Activated CD4-positive, alpha-beta T cell treated with anti-CD3 and anti-CD28 coated beads for 36 hours (primary cell): ENCODE measurements at regions of chr2 and their contacts with region 1.

Region 1: DNA sequence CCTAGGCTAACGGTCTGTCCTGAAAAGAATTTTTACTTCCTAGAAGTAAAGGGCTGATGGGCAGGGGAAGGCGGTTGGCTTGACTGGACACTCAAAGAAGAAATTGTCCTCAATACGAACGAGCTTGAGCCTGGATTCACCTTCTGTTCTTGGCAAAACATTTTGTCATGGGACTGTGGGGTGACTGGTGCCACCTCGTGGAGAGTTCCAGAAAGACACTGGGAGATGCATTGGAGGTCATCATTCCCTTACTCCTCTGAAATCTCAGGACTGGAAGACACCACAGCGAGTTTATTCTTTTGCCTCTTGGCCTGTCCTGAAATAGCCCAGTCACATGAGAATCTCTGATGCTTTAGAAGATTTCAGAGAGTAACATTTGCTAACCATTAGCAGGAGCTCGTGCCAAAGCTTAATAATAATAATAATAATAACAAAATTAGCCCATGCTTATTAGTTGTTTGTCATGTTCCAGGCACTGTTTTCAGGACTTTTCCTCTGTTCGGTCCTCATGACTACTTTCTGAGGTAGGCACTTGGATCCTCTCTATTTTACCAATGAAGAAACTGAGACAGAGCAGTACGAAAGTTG is 44.5 kb downstream of the TMEM182 start:
- DNase-seq: peak; percentile 64
- ATAC-seq: no peak
- H3K4me3 Mint-ChIP-seq: no peak overlapping the region
- H3K27ac Mint-ChIP-seq: no peak overlapping the region
- H3K4me1 Mint-ChIP-seq: peaks cover 22% of the 10 kb centered on the region
- H3K27me3 Mint-ChIP-seq: no peaks in the 10 kb centered on the region

Region 2: GRCh38 chr2:102520028-102520427 is 286.3 kb before region 1 on chr2:
- CTCF ChIA-PET with region 1: no interaction called
- POLR2A ChIA-PET with region 1: no interaction called
- intact Hi-C with region 1: loop called in 1 of 2 experiments (anchors 5 kb)
- DNase-seq: peak; percentile 52
- ATAC-seq: peak; percentile 80
- H3K4me3 Mint-ChIP-seq: no peak overlapping the region
- H3K27ac Mint-ChIP-seq: no peak overlapping the region
- H3K4me1 Mint-ChIP-seq: no peaks in the 10 kb centered on the region
- H3K27me3 Mint-ChIP-seq: peaks cover 2% of the 10 kb centered on the region

Region 3: DNA sequence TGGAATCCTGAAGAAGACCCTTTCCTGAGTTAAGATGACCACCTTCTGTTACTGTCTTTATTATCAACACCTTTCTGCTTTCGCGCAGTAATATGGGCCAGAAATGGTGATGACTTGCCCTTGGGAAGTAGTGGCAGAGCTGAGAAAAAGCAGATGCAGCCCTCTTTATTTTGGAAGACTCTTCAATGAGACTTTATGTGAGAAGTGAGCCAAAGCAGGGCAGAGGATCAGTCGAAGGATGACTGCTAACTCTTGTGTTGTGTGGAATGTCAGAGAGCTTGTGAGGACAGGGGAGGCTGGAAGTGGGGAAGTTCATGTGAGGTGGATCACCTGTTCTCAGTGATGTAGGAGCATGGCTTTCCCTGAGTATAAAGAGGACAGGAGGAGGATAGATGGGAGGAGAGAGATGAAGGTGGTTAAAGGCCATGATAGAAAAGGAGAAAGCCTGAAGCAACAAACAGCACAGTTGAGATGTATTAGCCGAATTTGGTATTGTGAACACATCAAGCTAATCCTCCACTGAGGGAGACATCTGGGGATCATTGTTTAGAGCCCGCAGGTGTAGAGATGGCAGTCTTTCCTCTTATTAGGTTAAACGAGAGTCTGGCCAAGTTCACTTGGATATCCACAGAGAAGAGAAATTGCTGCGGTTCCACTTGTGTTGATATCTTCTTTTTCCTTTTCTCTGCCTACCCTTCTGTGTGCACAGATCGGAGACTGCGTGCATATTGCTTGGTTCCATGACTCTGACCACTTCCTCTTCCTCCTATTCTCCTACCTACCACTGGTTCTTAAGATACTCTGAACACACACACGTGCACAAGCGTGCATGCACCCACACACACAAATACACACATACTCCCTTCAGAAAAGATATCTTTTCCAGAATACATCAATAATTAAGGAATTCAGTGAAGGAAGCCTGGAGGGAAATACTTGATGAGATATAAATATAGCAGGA is 119.6 kb before region 1 on chr2:
- CTCF ChIA-PET with region 1: no interaction called
- POLR2A ChIA-PET with region 1: no interaction called
- intact Hi-C with region 1: no loop called
- DNase-seq: peak; percentile 18
- ATAC-seq: peak; percentile 88
- H3K4me3 Mint-ChIP-seq: no peak overlapping the region
- H3K27ac Mint-ChIP-seq: no peak overlapping the region
- H3K4me1 Mint-ChIP-seq: peaks cover 8% of the 10 kb centered on the region
- H3K27me3 Mint-ChIP-seq: no peaks in the 10 kb centered on the region

Region 4: GRCh38 chr2:102736410-102737409 is 69.6 kb before region 1 on chr2:
- CTCF ChIA-PET with region 1: interaction called, 4 read pairs
- POLR2A ChIA-PET with region 1: no interaction called
- intact Hi-C with region 1: loop called in 1 of 2 experiments (anchors 5 kb)
- DNase-seq: peak; percentile 91
- ATAC-seq: peak; percentile 94
- H3K4me3 Mint-ChIP-seq: peak overlapping the region; percentile 96
- H3K27ac Mint-ChIP-seq: peak overlapping the region; percentile 91
- H3K4me1 Mint-ChIP-seq: peaks cover 31% of the 10 kb centered on the region
- H3K27me3 Mint-ChIP-seq: no peaks in the 10 kb centered on the region

Region 5: GRCh38 chr2:102771114-102771513 is 35.2 kb before region 1 on chr2:
- CTCF ChIA-PET with region 1: no interaction called
- POLR2A ChIA-PET with region 1: no interaction called
- intact Hi-C with region 1: loop called in 1 of 2 experiments (anchors 2 kb)
- DNase-seq: no peak
- ATAC-seq: no peak
- H3K4me3 Mint-ChIP-seq: no peak overlapping the region
- H3K27ac Mint-ChIP-seq: no peak overlapping the region
- H3K4me1 Mint-ChIP-seq: no peaks in the 10 kb centered on the region
- H3K27me3 Mint-ChIP-seq: no peaks in the 10 kb centered on the region

Region 6: GRCh38 chr2:102796337-102796736 is 10.0 kb before region 1 on chr2:
- CTCF ChIA-PET with region 1: interaction called, 10 read pairs
- POLR2A ChIA-PET with region 1: no interaction called
- intact Hi-C with region 1: no loop called
- DNase-seq: no peak
- ATAC-seq: no peak
- H3K4me3 Mint-ChIP-seq: no peak overlapping the region
- H3K27ac Mint-ChIP-seq: no peak overlapping the region
- H3K4me1 Mint-ChIP-seq: no peaks in the 10 kb centered on the region
- H3K27me3 Mint-ChIP-seq: no peaks in the 10 kb centered on the region

Region 7: DNA sequence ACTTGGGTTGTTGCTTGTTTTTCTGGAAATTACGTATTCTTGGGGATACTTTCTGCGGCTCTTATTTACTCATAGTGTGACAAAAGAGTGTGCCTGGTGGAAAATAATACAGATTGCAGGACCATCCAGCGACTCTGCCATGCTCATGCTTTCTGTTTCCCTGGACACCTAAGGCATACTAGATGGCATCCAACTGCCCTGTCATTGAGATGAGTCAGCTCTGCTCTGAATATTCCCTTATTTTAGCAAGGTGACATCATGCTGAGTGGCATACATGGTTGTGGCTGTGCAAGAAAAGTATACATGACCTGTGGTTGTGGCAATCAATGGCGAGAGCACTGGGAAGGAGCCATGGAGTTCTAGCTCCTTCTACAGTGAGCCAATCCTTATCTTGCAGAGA is 426.5 kb after region 1 on chr2:
- CTCF ChIA-PET with region 1: no interaction called
- POLR2A ChIA-PET with region 1: no interaction called
- intact Hi-C with region 1: no loop called
- DNase-seq: no peak
- ATAC-seq: no peak
- H3K4me3 Mint-ChIP-seq: no peak overlapping the region
- H3K27ac Mint-ChIP-seq: no peak overlapping the region
- H3K4me1 Mint-ChIP-seq: no peaks in the 10 kb centered on the region
- H3K27me3 Mint-ChIP-seq: no peaks in the 10 kb centered on the region

Region 8: GRCh38 chr2:103445347-103445746 is 639.0 kb after region 1 on chr2:
- CTCF ChIA-PET with region 1: no interaction called
- POLR2A ChIA-PET with region 1: no interaction called
- intact Hi-C with region 1: no loop called
- DNase-seq: no peak
- ATAC-seq: no peak
- H3K4me3 Mint-ChIP-seq: no peak overlapping the region
- H3K27ac Mint-ChIP-seq: no peak overlapping the region
- H3K4me1 Mint-ChIP-seq: no peaks in the 10 kb centered on the region
- H3K27me3 Mint-ChIP-seq: no peaks in the 10 kb centered on the region